ENCODE measurements at regions of chr3 and their contacts with region 1.

Region 1: GRCh38 chr3:65796676-65797075 is 242.0 kb downstream of the MAGI1 start:
- DNase-seq: no peak
- ATAC-seq: no peak
- H3K4me3 ChIP-seq: no peak overlapping the region
- H3K27ac ChIP-seq: no peak overlapping the region
- H3K4me1 ChIP-seq: peaks cover 0 to 14% (median 3%) of the 10 kb centered on the region in 12 donors
- H3K27me3 ChIP-seq: no peaks in the 10 kb centered on the region
- CTCF ChIP-seq: no peak
- POLR2A ChIP-seq: no peak

Region 2: GRCh38 chr3:65597226-65597951 is 199.3 kb before region 1 on chr3:
- intact Hi-C with region 1: no loop called
- DNase-seq: peak; percentile 35 to 57 (median 43)
- ATAC-seq: peak; percentile 28 to 81 (median 74)
- H3K4me3 ChIP-seq: peak overlapping the region in 10 of 12 donors; percentile 15 to 48 (median 34)
- H3K27ac ChIP-seq: no peak overlapping the region
- H3K4me1 ChIP-seq: peaks cover 0 to 25% (median 14%) of the 10 kb centered on the region in 12 donors
- H3K27me3 ChIP-seq: peaks cover 0 to 4% (median 0%) of the 10 kb centered on the region in 9 donors
- CTCF ChIP-seq: no peak
- POLR2A ChIP-seq: no peak

Region 3: GRCh38 chr3:65902304-65902793 is 105.7 kb after region 1 on chr3:
- intact Hi-C with region 1: loop called in 1 of 10 experiments (anchors 5 kb)
- DNase-seq: no peak
- ATAC-seq: no peak
- H3K4me3 ChIP-seq: no peak overlapping the region
- H3K27ac ChIP-seq: no peak overlapping the region
- H3K4me1 ChIP-seq: peaks cover 0 to 38% (median 20%) of the 10 kb centered on the region in 12 donors
- H3K27me3 ChIP-seq: no peaks in the 10 kb centered on the region
- CTCF ChIP-seq: no peak
- POLR2A ChIP-seq: no peak

Region 4: GRCh38 chr3:65971293-65972252 is 174.9 kb after region 1 on chr3:
- intact Hi-C with region 1: no loop called
- DNase-seq: no peak
- ATAC-seq: peak in 3 of 4 donors; percentile 38 to 73 (median 66)
- H3K4me3 ChIP-seq: no peak overlapping the region
- H3K27ac ChIP-seq: peak overlapping the region in 8 of 12 donors; percentile 1 to 48 (median 22)
- H3K4me1 ChIP-seq: peaks cover 0 to 43% (median 24%) of the 10 kb centered on the region in 12 donors
- H3K27me3 ChIP-seq: no peaks in the 10 kb centered on the region
- CTCF ChIP-seq: no peak
- POLR2A ChIP-seq: no peak

Measured in heart left ventricle (tissue), 16 donors.